ENCODE measurements at regions of chr4 and their contacts with region 1.

Region 1: DNA sequence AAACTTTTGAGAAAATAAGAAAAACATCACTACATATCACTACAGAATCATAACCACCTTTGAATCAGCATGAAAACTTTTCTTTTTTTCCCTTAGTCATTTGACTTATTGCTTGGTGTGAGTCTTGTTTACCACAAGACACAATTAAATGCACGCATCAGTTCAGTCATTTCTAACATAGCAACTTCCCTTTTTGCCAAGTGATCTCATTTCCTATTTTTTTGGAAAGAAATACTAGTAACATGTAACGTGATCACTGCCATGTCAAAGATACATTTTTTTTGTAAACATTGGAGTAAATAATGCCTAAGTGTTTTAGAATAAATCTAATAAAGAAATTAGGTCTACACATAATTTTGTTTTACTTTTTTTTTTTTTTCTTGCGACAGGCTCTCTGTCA is 5.1 kb upstream of the CXCL8 start:
- DNase-seq: no peak
- H3K4me3 Mint-ChIP-seq: no peak overlapping the region
- H3K27ac Mint-ChIP-seq: no peak overlapping the region
- H3K4me1 Mint-ChIP-seq: peaks cover 24% of the 10 kb centered on the region
- H3K27me3 Mint-ChIP-seq: no peaks in the 10 kb centered on the region

Region 2: GRCh38 chr4:73718375-73719373 is 16.6 kb before region 1 on chr4:
- intact Hi-C with region 1: loop called (anchors 2 kb)
- DNase-seq: no peak
- H3K4me3 Mint-ChIP-seq: no peak overlapping the region
- H3K27ac Mint-ChIP-seq: peak overlapping the region; percentile 21
- H3K4me1 Mint-ChIP-seq: peaks cover 19% of the 10 kb centered on the region
- H3K27me3 Mint-ChIP-seq: peaks cover 9% of the 10 kb centered on the region

Region 3: GRCh38 chr4:74016068-74016467 is 280.8 kb after region 1 on chr4:
- intact Hi-C with region 1: loop called (anchors 1 kb)
- DNase-seq: no peak
- H3K4me3 Mint-ChIP-seq: no peak overlapping the region
- H3K27ac Mint-ChIP-seq: peak overlapping the region; percentile 69
- H3K4me1 Mint-ChIP-seq: peaks cover 24% of the 10 kb centered on the region
- H3K27me3 Mint-ChIP-seq: no peaks in the 10 kb centered on the region

Measured in activated T-helper 2 cell treated with anti-CD3 and anti-CD28 coated beads, Interferon-gamma antibody, Interleukin-2, Interleukin-4, amounts not matched to agents 10 μg/mL and 5 μg/mL and 100 μg/mL, durations not matched to agents 14 hours and 24 hours and 36 hours (primary cell).